Activated naive CD8-positive, alpha-beta T cell treated with anti-CD3 and anti-CD28 coated beads, Interleukin-2, amount 10 ng/mL, durations not matched to agents 7 days and 5 days (primary cell): ENCODE measurements at regions of chr16 and their contacts with region 1.

Region 1: GRCh38 chr16:84116720-84117493 is at the start of gene MBTPS1:
- DNase-seq: peak; percentile 99
- ATAC-seq: peak; percentile 92
- H3K4me3 Mint-ChIP-seq: peak within 1 kb of the TSS; percentile 94
- H3K27ac Mint-ChIP-seq: peak within 1 kb of the TSS; percentile 95
- H3K4me1 Mint-ChIP-seq: peaks cover 10% of the 10 kb centered on the region
- H3K27me3 Mint-ChIP-seq: no peaks in the 10 kb centered on the region
- total RNA-seq, gene MBTPS1: 73.2 to 85.4 TPM

Region 2: GRCh38 chr16:84032458-84033178 is 84.3 kb before region 1 on chr16:
- POLR2A ChIA-PET with region 1: no interaction called
- DNase-seq: no peak
- ATAC-seq: no peak
- H3K4me3 Mint-ChIP-seq: no peak overlapping the region
- H3K27ac Mint-ChIP-seq: no peak overlapping the region
- H3K4me1 Mint-ChIP-seq: peaks cover 8% of the 10 kb centered on the region
- H3K27me3 Mint-ChIP-seq: peaks cover 20% of the 10 kb centered on the region

Region 3: GRCh38 chr16:84088695-84089395 is 28.1 kb before region 1 on chr16:
- POLR2A ChIA-PET with region 1: interaction called, 16 read pairs
- DNase-seq: peak; percentile 52
- ATAC-seq: peak; percentile 71
- H3K4me3 Mint-ChIP-seq: peak overlapping the region; percentile 35
- H3K27ac Mint-ChIP-seq: peak overlapping the region; percentile 73
- H3K4me1 Mint-ChIP-seq: peaks cover 43% of the 10 kb centered on the region
- H3K27me3 Mint-ChIP-seq: no peaks in the 10 kb centered on the region

Region 4: DNA sequence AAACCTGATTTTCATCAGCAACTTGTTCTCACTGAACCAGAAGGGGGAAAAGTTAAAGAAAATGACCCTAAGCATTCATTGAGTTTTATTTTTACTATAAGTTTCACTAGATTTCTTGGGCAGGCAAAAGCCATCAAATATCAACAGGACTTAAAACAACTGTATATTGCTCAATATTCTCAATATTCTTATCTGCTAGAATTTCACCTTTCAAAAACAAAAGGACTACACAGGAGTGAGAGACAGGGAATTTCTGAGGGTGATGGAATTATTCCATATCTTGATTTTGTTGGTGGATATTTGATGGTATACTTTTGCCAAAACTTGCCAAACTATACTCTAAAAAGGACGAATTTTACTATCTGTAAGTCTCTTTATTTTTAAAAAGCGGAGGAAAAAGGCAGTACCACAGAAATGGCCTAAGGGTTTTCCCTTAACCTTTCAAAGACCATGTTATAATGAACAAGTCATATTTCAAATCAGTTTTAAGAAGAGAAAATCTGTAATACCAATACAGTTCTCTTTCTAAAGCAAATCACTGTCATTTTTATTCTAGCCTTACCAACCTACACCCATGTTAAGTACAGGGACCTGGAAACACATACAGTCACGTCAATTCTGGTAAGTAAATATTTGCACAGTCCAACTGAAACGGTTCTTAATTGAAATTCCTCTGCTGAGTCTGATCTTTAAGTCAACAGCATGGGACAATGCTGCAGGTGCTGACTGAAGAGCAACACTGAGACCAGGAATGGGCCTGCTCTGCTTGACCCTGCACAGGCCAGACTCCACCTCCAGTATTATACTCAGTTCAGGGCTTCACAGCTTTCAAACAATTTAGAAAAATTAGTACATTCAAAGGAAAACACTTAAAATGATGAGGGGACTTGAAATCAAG is 20.5 kb before region 1 on chr16:
- POLR2A ChIA-PET with region 1: interaction called, 11 read pairs
- DNase-seq: no peak
- ATAC-seq: no peak
- H3K4me3 Mint-ChIP-seq: no peak overlapping the region
- H3K27ac Mint-ChIP-seq: no peak overlapping the region
- H3K4me1 Mint-ChIP-seq: peaks cover 15% of the 10 kb centered on the region
- H3K27me3 Mint-ChIP-seq: no peaks in the 10 kb centered on the region

Region 5: DNA sequence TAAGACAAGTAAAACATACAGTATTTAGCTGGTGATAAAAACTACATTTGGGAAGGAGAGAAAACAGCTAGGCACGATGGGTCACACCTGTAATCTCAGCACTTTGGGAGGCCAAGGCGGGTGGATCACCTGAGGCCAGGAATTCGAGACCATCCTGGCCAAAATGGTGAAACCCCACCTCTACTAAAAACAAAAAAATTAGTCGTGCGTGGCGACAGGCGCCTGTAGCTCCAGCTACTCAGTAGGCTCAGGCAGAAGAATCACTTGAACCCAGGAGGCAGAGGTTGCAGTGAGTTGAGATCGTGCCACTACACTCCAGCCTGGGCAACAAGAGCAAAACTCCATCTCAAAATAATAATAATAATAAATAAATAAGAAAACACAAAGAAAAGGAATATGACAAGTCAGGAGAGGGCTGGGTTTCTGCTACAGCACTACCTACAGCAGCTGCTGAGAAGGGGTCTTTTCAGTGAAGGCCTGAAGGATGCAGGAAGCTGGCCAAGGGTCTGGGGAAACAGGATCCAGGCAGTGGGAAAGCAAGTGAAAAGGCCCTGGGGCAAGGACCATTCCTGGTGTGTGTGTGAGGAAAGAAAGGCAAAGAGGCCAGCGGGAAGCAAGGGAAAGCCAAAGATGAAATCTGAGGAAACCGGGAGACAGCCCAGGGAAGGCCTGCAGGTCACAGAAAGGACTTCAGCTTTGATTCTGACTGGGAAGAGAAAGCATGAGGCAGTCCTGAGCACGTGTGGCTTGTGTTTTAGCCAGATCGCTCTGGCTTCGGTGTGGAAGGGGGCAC is 10.8 kb before region 1 on chr16:
- POLR2A ChIA-PET with region 1: interaction called, 11 read pairs
- DNase-seq: no peak
- ATAC-seq: no peak
- H3K4me3 Mint-ChIP-seq: no peak overlapping the region
- H3K27ac Mint-ChIP-seq: no peak overlapping the region
- H3K4me1 Mint-ChIP-seq: peaks cover 6% of the 10 kb centered on the region
- H3K27me3 Mint-ChIP-seq: no peaks in the 10 kb centered on the region

Region 6: GRCh38 chr16:84138824-84139627 is 22.1 kb after region 1 on chr16:
- POLR2A ChIA-PET with region 1: interaction called, 19 read pairs
- DNase-seq: no peak
- ATAC-seq: peak; percentile 93
- H3K4me3 Mint-ChIP-seq: peak overlapping the region; percentile 65
- H3K27ac Mint-ChIP-seq: peak overlapping the region; percentile 77
- H3K4me1 Mint-ChIP-seq: peaks cover 27% of the 10 kb centered on the region
- H3K27me3 Mint-ChIP-seq: no peaks in the 10 kb centered on the region

Region 7: DNA sequence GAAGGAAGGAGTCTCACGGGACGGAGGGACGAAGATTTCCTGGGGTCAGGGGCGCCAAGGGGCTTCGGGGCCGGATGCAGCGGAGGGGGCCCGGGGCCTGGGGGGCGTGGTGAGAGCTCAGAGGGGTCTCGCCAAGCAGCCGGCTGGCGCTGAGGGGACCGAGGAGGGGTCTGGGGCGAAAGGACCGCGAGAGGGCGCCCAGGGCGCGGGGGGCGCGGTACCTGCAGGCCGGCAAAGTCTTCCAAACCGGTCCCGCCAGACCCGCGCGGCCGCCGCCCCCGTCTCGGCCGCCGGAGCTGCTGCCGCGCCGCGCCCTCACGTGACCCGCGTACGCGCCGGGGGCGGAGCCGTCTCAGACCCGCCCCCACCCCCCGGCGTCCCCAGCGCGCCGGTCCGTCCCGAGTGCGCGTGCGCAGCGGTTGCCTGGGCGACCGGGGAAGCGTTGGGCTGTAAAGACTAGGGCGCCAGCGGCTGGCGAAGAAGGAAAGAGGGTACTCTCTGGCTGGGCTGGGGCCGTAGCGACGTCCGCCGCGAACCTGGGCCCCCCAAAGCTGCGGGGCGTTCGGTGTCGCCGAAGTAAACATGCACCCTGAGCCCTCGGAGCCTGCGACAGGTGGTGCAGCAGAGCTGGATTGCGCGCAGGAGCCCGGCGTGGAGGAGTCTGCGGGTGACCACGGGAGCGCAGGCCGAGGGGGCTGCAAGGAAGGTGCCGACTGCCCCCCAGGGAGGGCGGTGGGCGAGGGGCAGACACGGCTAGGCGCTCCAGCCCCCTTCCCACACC is 28.1 kb after region 1 on chr16 and contains the starts of genes DNAAF1 and HSDL1:
- POLR2A ChIA-PET with region 1: interaction called, 19 read pairs
- DNase-seq: peak; percentile 99
- ATAC-seq: peak; percentile 83
- H3K4me3 Mint-ChIP-seq: peak within 1 kb of the TSS; percentile 95
- H3K27ac Mint-ChIP-seq: peak within 1 kb of the TSS; percentile 80
- H3K4me1 Mint-ChIP-seq: peaks cover 5% of the 10 kb centered on the region
- H3K27me3 Mint-ChIP-seq: peaks cover 6% of the 10 kb centered on the region
- total RNA-seq, gene DNAAF1: not detected
- total RNA-seq, gene HSDL1: 10.7 to 12.5 TPM